ENCODE measurements at regions of chr12 and their contacts with region 1.

Region 1: DNA sequence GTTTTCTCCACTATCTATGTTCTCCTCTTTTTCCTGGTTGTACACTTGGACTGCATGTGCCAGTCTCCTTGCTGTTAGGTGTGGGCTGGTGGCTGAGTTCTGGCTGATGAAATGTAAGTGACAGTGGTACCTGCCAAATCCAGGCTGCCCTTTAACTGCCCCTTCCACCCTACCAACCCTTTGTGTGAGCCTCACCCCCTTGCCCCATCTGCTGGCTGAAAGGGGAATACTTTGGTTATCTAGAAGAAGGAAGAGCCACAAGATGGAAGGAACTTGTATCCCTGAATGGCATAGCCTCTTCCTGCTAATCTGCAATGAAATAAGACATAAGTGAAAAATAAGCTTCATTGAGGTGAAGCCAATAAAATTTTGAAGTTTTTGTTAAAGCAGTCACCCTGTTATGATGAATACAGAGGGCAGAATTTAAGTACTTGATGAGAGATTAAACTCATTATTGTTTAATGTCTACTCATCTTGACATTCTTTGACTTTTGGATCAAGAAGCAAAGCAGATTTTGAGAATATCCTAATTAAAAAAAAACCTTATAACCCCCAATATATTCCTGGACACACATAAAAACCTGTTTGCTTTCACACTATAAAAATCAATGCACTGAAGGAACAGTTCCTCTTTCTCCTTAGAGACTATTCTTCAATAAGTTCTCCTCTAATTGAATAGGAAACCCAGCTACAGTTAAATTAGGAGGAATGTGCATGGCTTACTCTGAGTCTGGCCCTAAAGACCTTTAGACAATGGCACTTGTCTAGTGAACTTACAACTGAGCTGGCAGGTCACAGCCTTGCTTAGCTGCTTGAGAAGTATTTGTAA is 262.6 kb upstream of the BTG1 start:
- DNase-seq: peak in 7 of 14 experiments; percentile 21 to 76 (median 59)
- ATAC-seq: no peak
- H3K4me3 ChIP-seq: no peak overlapping the region
- H3K4me3 Mint-ChIP-seq: peak overlapping the region; percentile 9
- H3K27ac ChIP-seq: no peak overlapping the region
- H3K27ac Mint-ChIP-seq: peak overlapping the region; percentile 40
- H3K4me1 ChIP-seq: peaks cover 43% of the 10 kb centered on the region
- H3K4me1 Mint-ChIP-seq: peaks cover 73% of the 10 kb centered on the region
- H3K27me3 ChIP-seq: no peaks in the 10 kb centered on the region
- H3K27me3 Mint-ChIP-seq: no peaks in the 10 kb centered on the region
- CTCF ChIP-seq: no peak

Region 2: GRCh38 chr12:92094751-92095161 is 313.5 kb before region 1 on chr12:
- CTCF ChIA-PET with region 1: no interaction called
- POLR2A ChIA-PET with region 1: no interaction called
- intact Hi-C with region 1: no loop called
- DNase-seq: no peak
- ATAC-seq: no peak
- H3K4me3 ChIP-seq: no peak overlapping the region
- H3K4me3 Mint-ChIP-seq: no peak overlapping the region
- H3K27ac ChIP-seq: no peak overlapping the region
- H3K27ac Mint-ChIP-seq: no peak overlapping the region
- H3K4me1 ChIP-seq: peaks cover 14% of the 10 kb centered on the region
- H3K4me1 Mint-ChIP-seq: peaks cover 79% of the 10 kb centered on the region
- H3K27me3 ChIP-seq: no peaks in the 10 kb centered on the region
- H3K27me3 Mint-ChIP-seq: no peaks in the 10 kb centered on the region
- CTCF ChIP-seq: no peak

Region 3: GRCh38 chr12:92378682-92379479 is 29.4 kb before region 1 on chr12:
- CTCF ChIA-PET with region 1: interaction called, 3 read pairs
- POLR2A ChIA-PET with region 1: interaction called, 6 read pairs
- intact Hi-C with region 1: loop called in 1 of 2 experiments (anchors 2 kb)
- DNase-seq: peak in 6 of 14 experiments; percentile 21 to 62 (median 48)
- ATAC-seq: peak; percentile 93
- H3K4me3 ChIP-seq: no peak overlapping the region
- H3K4me3 Mint-ChIP-seq: peak overlapping the region; percentile 14
- H3K27ac ChIP-seq: peak overlapping the region; percentile 26 to 66
- H3K27ac Mint-ChIP-seq: peak overlapping the region; percentile 84
- H3K4me1 ChIP-seq: peaks cover 26% of the 10 kb centered on the region
- H3K4me1 Mint-ChIP-seq: peaks cover 84% of the 10 kb centered on the region
- H3K27me3 ChIP-seq: no peaks in the 10 kb centered on the region
- H3K27me3 Mint-ChIP-seq: no peaks in the 10 kb centered on the region
- CTCF ChIP-seq: no peak

Region 4: GRCh38 chr12:92505254-92506231 is 97.3 kb after region 1 on chr12:
- CTCF ChIA-PET with region 1: no interaction called
- POLR2A ChIA-PET with region 1: interaction called, 16 read pairs
- intact Hi-C with region 1: no loop called
- DNase-seq: peak; percentile 10 to 75 (median 34)
- ATAC-seq: peak; percentile 75
- H3K4me3 ChIP-seq: peak overlapping the region; percentile 41
- H3K4me3 Mint-ChIP-seq: peak overlapping the region; percentile 84
- H3K27ac ChIP-seq: peak overlapping the region; percentile 38 to 79
- H3K27ac Mint-ChIP-seq: peak overlapping the region; percentile 90
- H3K4me1 ChIP-seq: peaks cover 32% of the 10 kb centered on the region
- H3K4me1 Mint-ChIP-seq: peaks cover 29% of the 10 kb centered on the region
- H3K27me3 ChIP-seq: no peaks in the 10 kb centered on the region
- H3K27me3 Mint-ChIP-seq: no peaks in the 10 kb centered on the region
- CTCF ChIP-seq: no peak

Region 5: GRCh38 chr12:92859650-92860386 is 451.5 kb after region 1 on chr12:
- CTCF ChIA-PET with region 1: no interaction called
- POLR2A ChIA-PET with region 1: no interaction called
- intact Hi-C with region 1: no loop called
- DNase-seq: no peak
- ATAC-seq: no peak
- H3K4me3 ChIP-seq: no peak overlapping the region
- H3K4me3 Mint-ChIP-seq: no peak overlapping the region
- H3K27ac ChIP-seq: no peak overlapping the region
- H3K27ac Mint-ChIP-seq: no peak overlapping the region
- H3K4me1 ChIP-seq: no peaks in the 10 kb centered on the region
- H3K4me1 Mint-ChIP-seq: peaks cover 15% of the 10 kb centered on the region
- H3K27me3 ChIP-seq: no peaks in the 10 kb centered on the region
- H3K27me3 Mint-ChIP-seq: no peaks in the 10 kb centered on the region
- CTCF ChIP-seq: no peak

Measured in CD4-positive, alpha-beta T cell (primary cell).